MCF 10A (cell line): ENCODE measurements at regions of chr12 and their contacts with region 1.

Region 1: DNA sequence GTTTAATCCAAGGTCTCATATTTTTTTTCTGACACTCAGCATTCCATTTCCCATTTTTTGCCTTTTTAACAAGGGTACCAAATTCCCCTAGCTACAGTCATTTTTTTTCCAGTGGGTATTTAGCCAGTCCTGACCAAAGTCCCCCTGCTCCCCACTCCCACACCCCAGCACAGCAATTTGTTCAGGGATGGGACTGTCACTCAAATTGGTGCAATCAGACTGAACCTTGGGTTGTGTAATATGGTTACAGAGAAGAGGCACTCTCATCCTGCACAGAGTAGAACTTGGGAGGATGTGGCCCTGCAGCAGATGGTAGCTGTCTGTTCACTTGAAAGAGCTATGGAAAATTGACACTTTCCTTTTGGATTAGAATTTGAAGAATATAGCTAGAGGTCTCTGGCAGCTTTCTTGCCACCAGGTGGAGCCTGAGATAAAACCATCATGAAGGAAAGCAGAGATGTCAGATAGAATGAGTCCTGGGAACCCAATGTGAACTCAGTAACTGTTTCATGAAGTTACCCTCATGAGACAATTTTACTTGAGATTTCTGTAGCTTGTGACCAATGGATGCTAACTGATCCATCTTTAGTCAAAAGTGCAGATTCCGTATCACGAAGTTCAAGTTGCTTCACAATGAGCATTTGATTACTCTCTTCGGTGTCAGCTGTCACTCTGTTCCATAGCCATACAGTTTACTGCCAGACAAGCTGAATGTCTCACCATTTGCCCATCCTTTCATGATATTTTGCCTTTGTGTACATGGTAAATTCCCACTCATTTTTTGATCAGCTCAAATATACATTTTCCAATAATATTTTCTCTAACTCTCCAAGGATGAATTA is 394.0 kb upstream of the SYT1 start:
- DNase-seq: peak; percentile 62
- H3K4me3 Mint-ChIP-seq: no peak overlapping the region
- H3K27ac Mint-ChIP-seq: no peak overlapping the region
- H3K4me1 Mint-ChIP-seq: peaks cover 8% of the 10 kb centered on the region
- H3K27me3 Mint-ChIP-seq: no peaks in the 10 kb centered on the region
- CTCF ChIP-seq: peak; percentile 54

Region 2: GRCh38 chr12:78146365-78146772 is 324.2 kb before region 1 on chr12:
- CTCF ChIA-PET with region 1: interaction called, 13 read pairs
- POLR2A ChIA-PET with region 1: no interaction called
- intact Hi-C with region 1: no loop called
- DNase-seq: peak; percentile 47
- H3K4me3 Mint-ChIP-seq: no peak overlapping the region
- H3K27ac Mint-ChIP-seq: no peak overlapping the region
- H3K4me1 Mint-ChIP-seq: no peaks in the 10 kb centered on the region
- H3K27me3 Mint-ChIP-seq: no peaks in the 10 kb centered on the region
- CTCF ChIP-seq: peak; percentile 62

Region 3: DNA sequence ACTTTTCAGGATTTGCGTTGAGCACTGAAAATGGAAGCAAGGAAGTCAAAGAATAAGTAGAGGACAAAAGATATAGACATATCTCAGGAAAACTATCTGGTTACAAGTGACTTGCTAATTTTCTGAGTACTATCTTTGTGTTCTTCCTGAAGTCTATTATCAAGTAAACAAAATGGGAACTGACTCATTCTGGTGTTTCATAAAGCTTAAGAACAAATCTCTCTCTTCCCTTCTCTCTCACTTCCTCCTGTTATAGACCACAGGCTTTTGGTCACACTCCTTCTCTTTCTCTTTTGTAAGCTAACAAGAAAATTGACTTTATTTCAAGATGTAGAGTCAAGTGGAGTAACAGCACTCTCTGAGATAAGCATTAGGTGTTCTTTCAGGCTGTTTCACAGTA is 12.6 kb before region 1 on chr12:
- CTCF ChIA-PET with region 1: interaction called, 19 read pairs
- POLR2A ChIA-PET with region 1: no interaction called
- intact Hi-C with region 1: no loop called
- DNase-seq: no peak
- H3K4me3 Mint-ChIP-seq: no peak overlapping the region
- H3K27ac Mint-ChIP-seq: no peak overlapping the region
- H3K4me1 Mint-ChIP-seq: peaks cover 9% of the 10 kb centered on the region
- H3K27me3 Mint-ChIP-seq: no peaks in the 10 kb centered on the region
- CTCF ChIP-seq: no peak

Region 4: DNA sequence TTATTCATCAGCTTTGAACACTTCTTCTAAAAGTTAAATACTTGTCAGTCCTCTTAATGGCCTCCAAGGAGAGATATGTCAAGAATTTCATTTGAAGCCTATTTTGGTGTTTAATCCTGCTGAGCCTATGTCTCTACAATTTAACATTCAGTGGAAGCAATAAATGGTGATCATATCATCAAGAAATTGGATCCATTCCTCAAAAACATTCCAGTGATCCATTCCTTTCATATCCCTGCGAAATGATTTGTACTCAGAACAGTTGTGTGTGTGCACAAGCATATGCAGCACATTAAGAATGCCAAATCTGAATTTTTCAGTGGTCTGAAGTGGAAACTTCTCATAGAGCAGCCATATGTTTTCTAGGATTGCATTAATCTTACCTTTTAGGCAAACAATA is 20.3 kb after region 1 on chr12:
- CTCF ChIA-PET with region 1: interaction called, 21 read pairs
- POLR2A ChIA-PET with region 1: no interaction called
- intact Hi-C with region 1: no loop called
- DNase-seq: no peak
- H3K4me3 Mint-ChIP-seq: no peak overlapping the region
- H3K27ac Mint-ChIP-seq: no peak overlapping the region
- H3K4me1 Mint-ChIP-seq: peaks cover 5% of the 10 kb centered on the region
- H3K27me3 Mint-ChIP-seq: no peaks in the 10 kb centered on the region
- CTCF ChIP-seq: no peak

Region 5: DNA sequence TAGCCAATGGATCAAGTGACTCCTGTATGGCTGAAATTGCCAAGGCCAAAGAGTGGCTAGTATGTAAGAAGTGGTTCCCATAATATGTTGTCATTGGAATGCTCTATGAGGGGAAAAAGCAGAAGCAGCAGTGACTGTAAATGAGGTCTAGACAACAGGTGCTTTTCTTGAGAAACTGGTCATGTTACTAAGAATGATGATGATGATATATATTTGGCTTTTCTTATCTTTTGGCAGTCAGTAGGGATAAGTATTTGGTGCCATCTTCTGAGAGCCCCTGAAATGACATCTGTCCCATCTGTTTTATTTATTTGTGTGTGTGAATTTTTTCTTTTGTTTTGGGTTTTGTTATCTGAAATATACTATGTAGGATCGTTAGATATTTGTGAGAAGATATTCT is 535.7 kb after region 1 on chr12:
- CTCF ChIA-PET with region 1: interaction called, 46 read pairs
- POLR2A ChIA-PET with region 1: no interaction called
- intact Hi-C with region 1: loop called (anchors 1 kb)
- DNase-seq: peak; percentile 22
- H3K4me3 Mint-ChIP-seq: no peak overlapping the region
- H3K27ac Mint-ChIP-seq: no peak overlapping the region
- H3K4me1 Mint-ChIP-seq: no peaks in the 10 kb centered on the region
- H3K27me3 Mint-ChIP-seq: no peaks in the 10 kb centered on the region
- CTCF ChIP-seq: peak; percentile 49